Dendritic cell treated with granulocyte-macrophage colony-stimulating factor and Interleukin-4, amounts not matched to agents 40 ng/mL and 50 ng/mL, for 4 days (primary cell): ENCODE measurements at regions of chr19 and their contacts with region 1.

Region 1: GRCh38 chr19:37906869-37907734 is at the start of gene SIPA1L3:
- H3K4me3 Mint-ChIP-seq: peak within 1 kb of the TSS; percentile 93
- H3K27ac Mint-ChIP-seq: peak within 1 kb of the TSS; percentile 80
- H3K4me1 Mint-ChIP-seq: peaks cover 48% of the 10 kb centered on the region
- H3K27me3 Mint-ChIP-seq: peaks cover 4% of the 10 kb centered on the region

Region 2: DNA sequence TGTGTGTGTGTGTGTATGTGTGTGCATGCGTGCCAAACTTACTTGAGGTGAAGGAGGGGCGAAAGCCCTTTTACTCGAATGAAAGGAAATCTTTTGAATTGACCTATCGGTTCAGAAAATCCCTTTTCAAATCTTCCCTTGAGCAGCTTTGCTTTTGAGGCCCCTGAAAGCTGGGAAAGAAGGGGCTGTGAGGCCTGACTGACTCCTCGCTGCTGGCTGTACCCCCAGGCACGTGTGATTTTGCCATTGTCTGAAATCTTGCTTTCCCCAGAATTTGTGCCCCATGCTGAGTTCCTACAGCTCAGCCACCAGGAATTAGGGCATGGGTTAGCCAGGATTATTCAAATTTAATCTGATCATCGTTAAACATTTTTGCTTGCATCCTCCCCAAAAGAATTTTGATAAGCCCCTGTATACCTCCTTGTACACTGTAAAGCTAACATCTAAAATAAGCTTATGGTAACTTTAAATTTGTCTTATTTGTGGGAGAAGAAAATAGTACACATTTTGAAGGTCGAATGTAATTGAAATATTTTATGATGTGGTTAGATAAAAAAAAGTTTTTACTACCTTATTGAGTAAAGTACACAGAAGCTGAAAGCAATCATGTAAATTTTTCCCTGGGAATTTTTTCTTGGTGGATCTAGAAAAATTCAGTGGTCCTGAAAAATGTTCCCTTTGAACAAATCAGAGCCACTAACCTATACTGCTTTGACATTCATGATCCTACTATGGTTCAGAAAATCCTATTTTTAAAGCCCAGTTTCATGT is 46.6 kb after region 1 on chr19:
- intact Hi-C with region 1: loop called (anchors 5 kb)
- H3K4me3 Mint-ChIP-seq: no peak overlapping the region
- H3K27ac Mint-ChIP-seq: peak overlapping the region; percentile 68
- H3K4me1 Mint-ChIP-seq: peaks cover 53% of the 10 kb centered on the region
- H3K27me3 Mint-ChIP-seq: no peaks in the 10 kb centered on the region

Region 3: DNA sequence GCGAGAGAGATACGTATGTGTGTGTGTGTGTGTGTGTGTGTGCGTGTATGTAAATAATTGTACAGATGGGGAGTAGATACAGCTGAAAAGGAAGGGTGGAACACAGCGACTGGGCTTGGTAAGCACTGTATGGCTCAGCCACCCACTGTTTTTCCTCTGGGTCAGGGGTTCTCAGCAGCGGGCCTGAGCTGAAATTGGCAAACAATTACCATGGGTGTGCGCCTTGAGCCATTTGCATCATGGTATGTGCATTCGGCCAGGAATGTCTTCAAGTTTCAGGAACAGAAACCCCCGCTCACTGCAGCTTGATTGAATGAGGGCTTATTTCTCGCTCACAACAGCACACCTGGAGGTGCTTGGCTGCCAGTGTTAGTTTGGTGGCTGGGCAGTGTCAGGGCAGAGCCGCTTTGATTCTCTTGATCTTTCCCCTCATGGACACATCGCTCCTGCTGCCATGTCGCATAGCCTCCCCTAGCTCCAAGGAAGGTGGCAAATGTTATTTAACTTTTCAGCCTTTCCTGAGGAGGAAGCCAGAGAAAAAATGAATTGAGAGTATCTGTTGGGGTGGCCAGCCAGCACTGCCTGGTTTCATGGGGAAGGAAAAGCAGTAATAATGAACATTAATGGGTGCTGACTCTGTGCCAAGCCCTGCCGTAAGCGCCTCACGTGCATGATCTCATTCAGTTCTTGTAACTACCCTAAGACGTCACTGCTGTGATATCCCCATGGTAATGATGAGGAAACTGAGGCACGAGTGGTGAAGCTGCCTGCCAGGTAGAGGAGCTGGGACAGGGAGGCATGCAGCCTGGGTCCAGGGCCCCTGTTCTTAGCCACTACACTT is 126.8 kb after region 1 on chr19:
- intact Hi-C with region 1: loop called (anchors 5 kb)
- H3K4me3 Mint-ChIP-seq: peak overlapping the region; percentile 17
- H3K27ac Mint-ChIP-seq: peak overlapping the region; percentile 80
- H3K4me1 Mint-ChIP-seq: peaks cover 67% of the 10 kb centered on the region
- H3K27me3 Mint-ChIP-seq: peaks cover 9% of the 10 kb centered on the region

Region 4: GRCh38 chr19:38079926-38080380 is 172.9 kb after region 1 on chr19:
- intact Hi-C with region 1: loop called (anchors 5 kb)
- H3K4me3 Mint-ChIP-seq: no peak overlapping the region
- H3K27ac Mint-ChIP-seq: peak overlapping the region; percentile 88
- H3K4me1 Mint-ChIP-seq: peaks cover 29% of the 10 kb centered on the region
- H3K27me3 Mint-ChIP-seq: no peaks in the 10 kb centered on the region

Region 5: GRCh38 chr19:38095411-38096308 is 188.6 kb after region 1 on chr19:
- intact Hi-C with region 1: loop called (anchors 2 kb)
- H3K4me3 Mint-ChIP-seq: no peak overlapping the region
- H3K27ac Mint-ChIP-seq: no peak overlapping the region
- H3K4me1 Mint-ChIP-seq: peaks cover 11% of the 10 kb centered on the region
- H3K27me3 Mint-ChIP-seq: no peaks in the 10 kb centered on the region

Region 6: DNA sequence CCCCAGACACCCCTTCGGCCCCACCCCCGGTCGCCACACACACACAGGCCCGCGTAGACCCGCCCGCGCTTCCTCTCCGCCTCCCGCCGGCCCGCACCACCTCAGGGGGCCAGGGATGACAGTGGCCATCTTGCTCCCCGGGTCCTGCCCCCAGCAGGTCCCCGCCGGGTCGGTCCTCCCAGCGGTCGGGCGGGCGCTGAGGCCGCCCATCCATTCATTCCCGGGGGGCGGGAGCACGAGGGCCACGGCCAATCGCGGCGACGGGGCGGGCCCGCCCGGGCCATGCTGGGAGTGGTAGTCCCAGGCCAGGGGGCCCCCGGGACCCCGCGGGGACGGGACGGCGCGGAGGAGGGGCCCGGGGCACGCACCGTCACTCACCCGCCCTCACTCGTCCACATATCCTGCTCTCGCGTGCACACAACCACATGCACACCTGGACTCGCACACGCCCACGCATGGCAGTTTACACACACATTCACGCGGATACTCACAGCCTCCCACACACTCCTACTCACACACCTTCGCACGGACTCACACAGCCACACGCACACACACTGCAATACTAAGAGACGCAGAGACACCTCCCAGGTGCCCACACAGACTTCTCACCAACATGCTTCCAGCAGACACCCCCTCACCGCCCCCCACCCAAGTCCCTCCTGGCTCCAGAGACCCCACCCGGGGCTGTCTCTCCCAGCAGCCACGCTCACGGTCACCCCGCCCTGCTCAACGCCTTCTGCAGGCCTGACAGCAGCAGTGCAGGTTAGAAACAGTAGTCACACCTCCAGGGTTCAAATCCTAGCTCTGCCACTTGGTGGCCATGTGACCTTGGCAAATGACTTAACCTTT is 317.1 kb after region 1 on chr19 and contains the start of gene DPF1:
- intact Hi-C with region 1: loop called (anchors 10 kb)
- H3K4me3 Mint-ChIP-seq: peak within 1 kb of the TSS; percentile 64
- H3K27ac Mint-ChIP-seq: no peak within 1 kb of the TSS
- H3K4me1 Mint-ChIP-seq: peaks cover 16% of the 10 kb centered on the region
- H3K27me3 Mint-ChIP-seq: peaks cover 83% of the 10 kb centered on the region